Activated CD8-positive, alpha-beta memory T cell treated with anti-CD3 and anti-CD28 coated beads, Interleukin-2, amount 10 ng/mL, durations not matched to agents 7 days and 5 days (primary cell): ENCODE measurements at regions of chr5 and their contacts with region 1.

Region 1: GRCh38 chr5:154072414-154073171 is 33.8 kb downstream of the MFAP3 start:
- DNase-seq: peak; percentile 92
- ATAC-seq: peak; percentile 87
- H3K4me3 Mint-ChIP-seq: peak overlapping the region; percentile 38
- H3K27ac Mint-ChIP-seq: peak overlapping the region; percentile 84
- H3K4me1 Mint-ChIP-seq: peaks cover 55% of the 10 kb centered on the region
- H3K27me3 Mint-ChIP-seq: no peaks in the 10 kb centered on the region

Region 2: GRCh38 chr5:153974131-153974812 is 98.3 kb before region 1 on chr5:
- CTCF ChIA-PET with region 1: interaction called, 12 read pairs
- DNase-seq: peak; percentile 54
- ATAC-seq: peak; percentile 64
- H3K4me3 Mint-ChIP-seq: no peak overlapping the region
- H3K27ac Mint-ChIP-seq: no peak overlapping the region
- H3K4me1 Mint-ChIP-seq: no peaks in the 10 kb centered on the region
- H3K27me3 Mint-ChIP-seq: peaks cover 14% of the 10 kb centered on the region

Region 3: DNA sequence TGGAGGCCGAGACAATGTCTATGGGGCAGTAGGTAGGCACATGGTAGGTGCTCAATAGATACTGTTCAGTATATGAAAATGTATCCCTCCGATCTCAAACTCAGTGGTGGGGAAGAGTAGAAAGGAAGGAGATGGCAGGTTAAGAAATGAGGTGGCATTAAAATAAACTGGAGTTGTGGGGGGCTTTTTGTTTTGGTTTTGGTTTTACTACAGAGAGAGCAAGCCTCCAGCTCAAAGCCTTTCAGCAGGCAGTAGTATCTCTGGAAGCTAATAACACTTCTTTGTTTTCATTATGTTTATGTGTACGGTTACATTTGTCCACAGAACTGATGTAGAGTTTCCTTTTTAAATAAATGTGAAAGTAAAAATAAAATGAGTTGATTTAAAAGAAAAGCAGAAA is 25.3 kb before region 1 on chr5:
- CTCF ChIA-PET with region 1: interaction called, 11 read pairs
- DNase-seq: no peak
- ATAC-seq: peak; percentile 83
- H3K4me3 Mint-ChIP-seq: peak overlapping the region; percentile 60
- H3K27ac Mint-ChIP-seq: peak overlapping the region; percentile 82
- H3K4me1 Mint-ChIP-seq: peaks cover 40% of the 10 kb centered on the region
- H3K27me3 Mint-ChIP-seq: no peaks in the 10 kb centered on the region

Region 4: DNA sequence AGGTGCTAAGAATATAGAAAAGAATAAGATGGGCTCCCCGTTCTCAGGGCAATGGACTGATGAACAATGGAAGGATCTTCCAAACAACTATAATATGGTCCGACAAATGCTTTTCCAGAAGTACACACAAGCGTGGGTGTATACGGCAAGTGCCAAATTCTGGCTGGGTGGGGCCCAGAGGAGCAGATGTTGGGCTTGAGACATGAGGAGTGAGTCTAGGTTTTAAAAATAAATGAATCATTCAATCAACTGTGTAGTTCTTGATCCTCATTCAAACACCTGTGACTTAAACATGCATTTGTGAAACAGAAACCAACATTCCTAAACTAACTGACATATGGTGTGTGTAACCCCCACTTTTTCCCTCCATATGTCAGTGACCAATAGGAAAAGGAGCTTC is 14.0 kb after region 1 on chr5:
- CTCF ChIA-PET with region 1: interaction called, 10 read pairs
- DNase-seq: no peak
- ATAC-seq: no peak
- H3K4me3 Mint-ChIP-seq: no peak overlapping the region
- H3K27ac Mint-ChIP-seq: no peak overlapping the region
- H3K4me1 Mint-ChIP-seq: no peaks in the 10 kb centered on the region
- H3K27me3 Mint-ChIP-seq: no peaks in the 10 kb centered on the region

Region 5: DNA sequence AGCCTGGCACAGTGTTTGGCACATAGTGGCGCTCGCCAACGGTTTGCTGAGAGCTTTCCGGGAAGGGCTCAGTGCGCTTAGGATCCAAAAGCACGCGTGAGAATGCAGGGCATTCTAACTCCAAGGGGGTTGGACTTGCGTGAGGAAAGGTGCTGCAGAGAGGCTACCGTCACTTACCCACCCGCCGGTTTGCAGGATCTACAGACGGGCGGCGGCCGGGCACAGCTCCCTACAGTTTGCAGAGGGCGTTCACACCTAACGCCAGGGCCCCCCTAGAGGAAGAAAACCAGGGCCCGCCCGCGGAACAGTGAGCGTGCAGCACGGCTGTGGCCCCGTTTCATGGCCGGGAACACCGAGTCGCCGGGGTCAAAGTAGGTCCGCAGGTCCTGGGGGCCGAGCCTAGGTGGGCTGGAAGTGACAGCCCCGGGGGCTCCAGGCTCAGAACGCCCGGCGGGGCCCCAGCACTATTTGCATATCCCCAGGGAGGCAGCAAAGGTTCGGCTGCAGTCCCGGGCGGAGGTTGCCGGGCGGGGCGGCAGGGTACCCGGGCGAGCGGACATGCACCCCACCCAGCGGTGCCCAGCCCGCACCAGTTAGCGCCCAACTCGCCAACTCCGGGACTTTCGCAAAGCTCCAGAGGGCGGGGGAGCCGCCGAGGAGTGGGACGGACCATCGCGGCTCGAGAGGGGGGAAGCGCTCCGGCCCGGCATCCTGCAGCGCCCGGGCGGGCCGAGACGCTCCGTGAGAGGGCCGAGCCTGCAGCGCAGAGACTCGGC is 117.4 kb after region 1 on chr5:
- CTCF ChIA-PET with region 1: interaction called, 199 read pairs
- DNase-seq: peak; percentile 86
- ATAC-seq: peak; percentile 84
- H3K4me3 Mint-ChIP-seq: peak overlapping the region; percentile 81
- H3K27ac Mint-ChIP-seq: peak overlapping the region; percentile 68
- H3K4me1 Mint-ChIP-seq: peaks cover 31% of the 10 kb centered on the region
- H3K27me3 Mint-ChIP-seq: peaks cover 3% of the 10 kb centered on the region

Region 6: DNA sequence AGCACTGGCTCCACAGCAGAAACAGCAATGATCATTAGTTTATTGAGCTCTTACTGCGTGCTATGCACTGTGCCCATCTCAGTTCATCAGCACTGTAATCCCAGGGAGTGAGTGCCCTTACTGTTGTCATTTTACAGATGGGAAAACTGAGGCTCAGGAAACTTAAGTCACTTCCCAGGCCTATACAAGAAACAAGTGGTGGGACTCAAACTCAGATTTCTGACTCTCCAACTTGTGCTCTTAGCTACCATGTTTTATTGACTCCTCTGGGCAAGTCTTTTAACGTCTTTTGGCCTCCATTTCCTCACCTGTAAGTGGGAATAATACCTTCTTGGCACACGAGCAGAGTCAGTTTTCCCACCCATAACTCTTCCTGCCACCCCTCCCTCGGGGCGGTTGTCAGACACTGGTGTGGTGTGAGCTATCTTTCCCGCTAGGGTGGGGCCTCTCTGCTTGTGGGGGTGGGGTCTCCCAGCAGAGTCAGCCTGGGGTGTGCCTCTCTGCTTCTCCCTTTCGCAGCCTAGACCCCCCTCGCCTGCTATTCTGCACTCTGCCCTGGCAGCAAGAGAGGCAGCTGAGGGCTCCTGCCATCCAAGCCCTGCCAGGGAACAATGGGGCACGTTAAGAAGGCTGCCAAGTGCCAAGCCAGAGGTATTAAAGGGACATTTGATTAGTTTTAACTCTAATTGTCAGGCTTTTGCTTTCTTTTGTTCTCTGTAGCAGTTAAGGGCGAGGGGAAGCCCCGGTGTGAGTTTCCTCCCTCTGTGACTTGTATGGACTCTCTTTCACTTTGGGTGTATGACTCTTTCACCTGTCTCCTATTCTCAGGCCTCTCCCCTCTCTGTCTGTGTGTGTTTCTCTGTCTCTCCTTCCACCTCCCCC is 130.0 kb after region 1 on chr5:
- CTCF ChIA-PET with region 1: interaction called, 27 read pairs
- DNase-seq: peak; percentile 67
- ATAC-seq: peak; percentile 62
- H3K4me3 Mint-ChIP-seq: peak overlapping the region; percentile 66
- H3K27ac Mint-ChIP-seq: peak overlapping the region; percentile 80
- H3K4me1 Mint-ChIP-seq: peaks cover 51% of the 10 kb centered on the region
- H3K27me3 Mint-ChIP-seq: no peaks in the 10 kb centered on the region

Region 7: DNA sequence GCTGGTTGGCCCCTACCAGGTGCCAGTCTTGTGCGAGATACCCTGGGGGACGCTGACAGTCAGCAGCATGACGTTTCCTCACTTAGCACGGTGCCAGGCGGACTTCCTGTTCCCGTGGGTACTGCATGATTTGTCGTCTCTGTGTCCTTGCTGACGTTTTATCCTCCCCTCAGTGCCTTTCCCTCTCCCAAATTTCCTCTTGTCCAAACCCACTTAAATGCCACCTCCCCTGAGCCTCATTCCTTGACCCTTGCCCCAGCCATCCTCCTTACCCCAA is 312.6 kb after region 1 on chr5:
- CTCF ChIA-PET with region 1: interaction called, 11 read pairs
- DNase-seq: peak; percentile 43
- ATAC-seq: peak; percentile 46
- H3K4me3 Mint-ChIP-seq: no peak overlapping the region
- H3K27ac Mint-ChIP-seq: peak overlapping the region; percentile 47
- H3K4me1 Mint-ChIP-seq: peaks cover 18% of the 10 kb centered on the region
- H3K27me3 Mint-ChIP-seq: no peaks in the 10 kb centered on the region